Dendritic cell treated with granulocyte-macrophage colony-stimulating factor and Interleukin-4, amounts not matched to agents 40 ng/mL and 50 ng/mL, for 4 days (primary cell): ENCODE measurements at regions of chr2 and their contacts with region 1.

Region 1: GRCh38 chr2:237858294-237859081 is 935 bp upstream of the RAMP1 start:
- H3K4me3 Mint-ChIP-seq: peak overlapping the region; percentile 79
- H3K27ac Mint-ChIP-seq: peak overlapping the region; percentile 84
- H3K4me1 Mint-ChIP-seq: peaks cover 33% of the 10 kb centered on the region
- H3K27me3 Mint-ChIP-seq: peaks cover 58% of the 10 kb centered on the region

Region 2: GRCh38 chr2:237633061-237633561 is 225.4 kb before region 1 on chr2:
- intact Hi-C with region 1: no loop called
- H3K4me3 Mint-ChIP-seq: no peak overlapping the region
- H3K27ac Mint-ChIP-seq: no peak overlapping the region
- H3K4me1 Mint-ChIP-seq: peaks cover 17% of the 10 kb centered on the region
- H3K27me3 Mint-ChIP-seq: peaks cover 46% of the 10 kb centered on the region

Region 3: DNA sequence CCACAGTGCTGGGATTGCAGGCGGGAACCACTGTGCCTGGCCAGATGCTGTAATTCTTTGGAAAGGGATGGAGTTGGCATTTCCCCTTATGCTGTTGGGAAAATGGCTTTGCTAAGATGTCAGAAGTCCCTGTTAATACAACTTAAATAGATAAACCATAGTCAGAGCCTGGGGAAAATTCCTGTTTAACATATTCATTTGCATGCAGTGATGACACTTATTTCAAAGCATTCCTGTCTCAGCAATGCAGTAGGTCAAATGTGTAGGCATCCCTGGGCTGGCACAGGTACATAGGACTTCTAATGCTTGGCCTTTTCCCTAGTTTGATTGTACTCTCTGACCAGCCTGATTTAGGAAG is 39.5 kb after region 1 on chr2:
- intact Hi-C with region 1: loop called (anchors 2 kb)
- H3K4me3 Mint-ChIP-seq: peak overlapping the region; percentile 27
- H3K27ac Mint-ChIP-seq: peak overlapping the region; percentile 85
- H3K4me1 Mint-ChIP-seq: peaks cover 80% of the 10 kb centered on the region
- H3K27me3 Mint-ChIP-seq: peaks cover 14% of the 10 kb centered on the region

Region 4: DNA sequence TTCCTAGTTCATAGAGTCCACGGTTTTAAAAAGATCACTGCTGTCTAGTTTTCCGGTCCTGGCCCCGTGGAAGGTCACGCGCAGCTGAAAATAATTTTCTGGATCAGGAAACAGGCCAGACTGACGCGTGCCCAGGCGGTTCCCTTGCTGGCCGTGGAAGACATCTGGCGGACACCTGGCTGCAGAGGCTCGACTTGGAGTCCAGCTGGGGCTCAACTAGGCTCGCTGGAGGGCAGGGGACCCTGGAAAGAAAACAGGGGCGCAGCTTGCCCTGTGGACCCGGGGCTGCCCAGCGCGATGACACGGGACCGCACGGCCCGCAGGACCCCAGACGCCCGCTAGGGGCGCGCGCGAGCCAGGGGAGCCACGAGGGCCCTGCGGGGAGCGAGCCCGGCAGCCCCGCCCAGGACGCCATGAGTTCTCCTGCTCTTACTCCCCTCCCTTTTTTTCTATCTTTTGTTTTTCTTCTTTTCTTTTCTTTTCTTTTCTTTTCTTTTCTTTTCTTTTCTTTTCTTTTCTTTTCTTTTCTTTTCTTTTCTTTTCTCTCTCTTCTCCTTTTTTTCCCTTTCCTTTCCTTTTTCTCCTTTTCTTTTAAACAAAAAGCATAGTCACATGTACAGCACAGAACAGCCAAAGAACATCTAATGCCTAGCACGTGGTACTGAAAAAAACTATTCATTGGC is 65.1 kb after region 1 on chr2:
- intact Hi-C with region 1: loop called (anchors 2 kb)
- H3K4me3 Mint-ChIP-seq: peak overlapping the region; percentile 75
- H3K27ac Mint-ChIP-seq: peak overlapping the region; percentile 88
- H3K4me1 Mint-ChIP-seq: peaks cover 54% of the 10 kb centered on the region
- H3K27me3 Mint-ChIP-seq: peaks cover 39% of the 10 kb centered on the region

Region 5: DNA sequence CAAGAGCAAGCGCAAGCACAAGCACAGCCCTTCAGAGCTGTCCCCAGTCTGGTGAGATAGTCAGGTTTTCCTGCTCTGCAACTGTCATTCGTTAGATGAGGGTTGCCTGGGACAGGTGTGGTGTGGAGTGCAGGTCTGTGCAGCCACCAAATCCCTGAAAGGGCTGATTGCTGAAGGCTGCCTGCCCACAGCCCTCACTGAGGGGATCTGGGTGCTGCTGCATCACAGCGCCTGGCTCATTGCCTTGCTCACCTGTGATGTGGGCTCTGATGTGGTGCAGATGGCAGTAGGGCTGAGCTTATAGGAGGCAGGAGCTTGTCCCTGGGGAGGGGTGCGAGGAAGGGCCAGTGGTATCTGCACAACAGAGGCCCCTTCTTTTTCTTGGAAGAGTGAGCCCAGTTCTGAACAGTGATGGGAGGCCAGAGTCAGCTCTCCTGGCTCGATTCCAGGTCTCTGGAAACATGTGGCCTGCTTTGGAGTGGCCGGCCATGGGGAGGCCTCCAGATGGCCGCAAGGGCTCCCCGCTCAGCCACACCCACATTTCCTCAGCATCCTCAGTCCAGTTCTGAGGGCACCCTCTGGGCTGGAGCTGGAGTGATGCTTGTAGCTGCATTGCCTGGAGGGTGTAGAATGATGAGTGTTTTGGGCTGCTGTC is 119.7 kb after region 1 on chr2:
- intact Hi-C with region 1: no loop called
- H3K4me3 Mint-ChIP-seq: no peak overlapping the region
- H3K27ac Mint-ChIP-seq: peak overlapping the region; percentile 2
- H3K4me1 Mint-ChIP-seq: peaks cover 71% of the 10 kb centered on the region
- H3K27me3 Mint-ChIP-seq: no peaks in the 10 kb centered on the region

Region 6: DNA sequence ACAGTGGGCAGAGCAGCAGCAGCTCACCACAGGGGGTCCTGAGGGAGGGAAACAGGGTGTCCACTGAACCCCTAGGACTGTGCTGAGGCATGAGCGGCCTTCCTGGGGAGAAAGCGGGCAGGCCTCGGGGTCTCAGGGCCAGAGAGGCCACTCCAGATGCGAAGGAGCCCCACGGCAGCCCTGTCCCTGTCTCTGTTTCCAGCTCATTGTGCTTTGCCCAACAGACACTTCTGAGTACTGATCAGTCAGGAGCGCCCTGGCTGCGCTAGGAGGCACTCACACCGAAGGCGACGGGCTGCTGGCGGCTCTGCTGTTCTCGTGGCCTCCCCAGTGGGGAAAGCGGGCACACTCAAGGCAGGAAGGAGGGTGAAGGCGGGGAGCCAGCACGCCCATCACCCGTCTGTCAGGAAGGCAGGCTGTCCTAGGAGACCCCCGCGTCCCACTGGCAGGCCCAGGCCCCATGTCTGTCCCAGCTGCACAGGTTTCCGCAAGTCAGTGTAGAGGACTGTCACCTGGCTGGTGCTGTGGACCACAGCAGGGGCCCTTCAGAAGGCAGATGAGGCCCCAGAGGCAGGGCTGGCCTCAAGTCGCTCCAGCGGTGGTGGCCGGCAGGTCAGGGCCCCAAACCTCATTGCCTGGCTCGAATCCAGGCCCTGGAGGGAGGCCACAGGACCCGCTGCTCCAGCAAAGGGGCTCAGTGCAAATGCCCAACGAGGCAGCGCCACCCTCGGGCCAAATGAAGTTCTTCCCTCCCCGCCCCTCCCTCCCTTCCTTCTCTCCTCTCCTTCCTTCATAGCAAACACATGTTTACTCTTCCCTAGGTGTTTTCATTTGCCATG is 248.4 kb after region 1 on chr2:
- intact Hi-C with region 1: loop called (anchors 2 kb)
- H3K4me3 Mint-ChIP-seq: peak overlapping the region; percentile 67
- H3K27ac Mint-ChIP-seq: peak overlapping the region; percentile 67
- H3K4me1 Mint-ChIP-seq: peaks cover 71% of the 10 kb centered on the region
- H3K27me3 Mint-ChIP-seq: peaks cover 3% of the 10 kb centered on the region

Region 7: DNA sequence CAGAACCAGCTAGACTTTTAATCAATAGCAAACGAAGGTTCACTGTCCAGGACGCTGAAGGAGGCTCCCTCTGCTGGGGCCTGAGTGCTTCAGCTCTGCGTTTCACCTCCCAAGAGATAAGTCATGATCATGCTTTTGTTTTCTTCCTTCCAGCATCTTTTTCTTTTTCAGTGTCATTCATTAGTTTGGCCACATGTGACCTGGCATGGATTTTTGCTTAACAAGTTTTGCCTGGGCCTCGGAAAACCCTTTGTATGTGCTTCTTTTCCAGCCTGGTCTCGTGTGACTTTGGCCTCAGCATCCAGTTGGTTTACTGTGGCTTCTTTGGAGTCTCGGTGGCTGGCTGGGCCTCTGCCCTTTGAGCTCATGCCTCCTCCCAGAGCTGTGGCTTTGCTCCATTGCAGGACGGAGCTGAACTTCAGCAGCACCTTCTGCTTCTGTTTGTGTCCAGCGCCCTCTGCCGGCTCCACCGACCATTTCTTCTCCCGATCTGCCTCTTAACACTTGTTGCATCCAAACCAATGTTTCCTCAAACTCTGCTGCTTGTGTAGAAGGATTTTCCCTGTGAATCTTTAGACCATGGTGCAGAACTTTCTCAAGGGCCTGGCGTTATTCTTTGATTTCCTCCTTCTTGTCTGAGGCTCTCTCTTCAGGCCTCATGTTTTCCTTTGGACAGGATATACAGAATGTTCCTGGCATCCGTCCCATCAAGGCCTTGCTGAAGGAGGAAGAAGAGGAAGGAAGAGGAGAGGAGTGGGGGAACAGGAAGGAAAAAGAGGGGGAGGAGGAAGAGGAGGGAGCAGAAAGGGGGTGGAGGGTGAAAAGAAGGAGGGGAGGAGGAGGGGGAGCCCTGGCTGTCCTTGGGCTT is 404.9 kb after region 1 on chr2:
- intact Hi-C with region 1: loop called (anchors 1 kb)
- H3K4me3 Mint-ChIP-seq: no peak overlapping the region
- H3K27ac Mint-ChIP-seq: peak overlapping the region; percentile 46
- H3K4me1 Mint-ChIP-seq: peaks cover 12% of the 10 kb centered on the region
- H3K27me3 Mint-ChIP-seq: no peaks in the 10 kb centered on the region